ENCODE measurements at regions of chr16 and their contacts with region 1.

Region 1: GRCh38 chr16:48556913-48557351 is 53.0 kb downstream of the N4BP1 start:
- DNase-seq: no peak
- H3K4me3 Mint-ChIP-seq: no peak overlapping the region
- H3K27ac Mint-ChIP-seq: no peak overlapping the region
- H3K4me1 Mint-ChIP-seq: peaks cover 9% of the 10 kb centered on the region
- H3K27me3 Mint-ChIP-seq: no peaks in the 10 kb centered on the region
- CTCF ChIP-seq: no peak

Region 2: DNA sequence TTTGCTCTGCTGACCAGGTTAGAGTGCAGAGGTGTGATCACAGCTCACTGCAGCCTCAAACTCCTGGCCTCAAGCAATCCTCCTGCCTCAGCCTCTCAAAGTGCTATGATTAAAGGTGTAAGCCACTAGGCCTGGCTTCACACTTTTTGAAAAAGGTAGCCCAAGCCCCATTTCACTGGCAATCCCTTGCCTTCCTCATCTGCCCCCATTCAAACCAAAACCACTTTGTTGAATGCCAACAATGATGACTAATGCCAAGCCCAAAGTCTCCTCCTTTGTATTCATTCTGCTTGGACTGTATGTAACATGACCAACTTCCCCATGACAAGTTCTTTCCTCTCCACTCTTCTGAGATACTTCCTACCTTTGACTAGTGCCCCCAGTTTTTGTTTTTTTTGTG is 20.0 kb after region 1 on chr16:
- CTCF ChIA-PET with region 1: no interaction called
- intact Hi-C with region 1: loop called (anchors 1 kb)
- DNase-seq: peak; percentile 21
- H3K4me3 Mint-ChIP-seq: no peak overlapping the region
- H3K27ac Mint-ChIP-seq: peak overlapping the region; percentile 4
- H3K4me1 Mint-ChIP-seq: peaks cover 42% of the 10 kb centered on the region
- H3K27me3 Mint-ChIP-seq: no peaks in the 10 kb centered on the region
- CTCF ChIP-seq: no peak